Mammary epithelial cell (primary cell): ENCODE measurements at regions of chr13 and their contacts with region 1.

Region 1: GRCh38 chr13:111076156-111077013 is 38.7 kb upstream of the ARHGEF7 start:
- DNase-seq: no peak
- H3K4me3 ChIP-seq: no peak overlapping the region
- H3K27ac ChIP-seq: no peak overlapping the region
- H3K4me1 ChIP-seq: no peaks in the 10 kb centered on the region
- H3K27me3 ChIP-seq: no peaks in the 10 kb centered on the region
- CTCF ChIP-seq: no peak

Region 2: DNA sequence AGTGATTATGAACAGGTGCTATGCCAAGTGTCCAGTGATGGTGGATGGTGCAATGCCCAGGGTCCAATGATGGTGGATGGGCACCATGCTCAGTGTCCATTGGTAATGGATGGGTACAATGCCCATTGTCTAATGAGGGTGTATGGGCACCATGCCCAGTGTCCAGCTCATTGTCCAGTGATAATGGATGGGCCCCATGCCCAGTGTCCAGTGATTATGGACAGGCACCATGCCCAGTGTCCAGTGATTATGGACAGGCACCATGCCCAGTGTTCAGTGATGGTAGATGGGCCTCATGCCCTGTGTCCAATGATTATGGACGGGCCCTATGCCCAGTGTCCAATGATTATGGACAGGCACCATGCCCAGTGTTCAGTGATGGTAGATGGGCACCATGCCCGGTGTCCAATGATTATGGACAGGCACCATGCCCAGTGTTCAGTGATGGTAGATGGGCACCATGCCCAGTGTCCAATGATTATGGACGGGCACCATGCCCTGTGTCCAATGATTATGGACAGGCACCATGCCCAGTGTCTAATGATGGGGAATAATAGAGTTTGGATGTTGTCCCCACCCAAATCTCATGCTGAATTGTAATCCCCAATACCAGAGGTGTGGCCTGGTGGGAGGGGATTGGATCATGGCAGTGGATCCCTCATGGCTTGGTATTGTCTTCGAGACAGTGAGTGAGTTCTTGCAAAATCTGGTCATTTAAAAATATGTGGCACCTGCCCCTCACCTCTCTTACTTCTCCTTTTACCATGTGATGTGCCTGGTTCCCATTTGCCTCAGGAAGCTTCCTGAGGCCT is 249.3 kb before region 1 on chr13:
- CTCF ChIA-PET with region 1: no interaction called
- dilution Hi-C with region 1: no loop called
- in situ Hi-C with region 1: no loop called
- intact Hi-C with region 1: no loop called
- DNase-seq: no peak
- H3K4me3 ChIP-seq: no peak overlapping the region
- H3K27ac ChIP-seq: no peak overlapping the region
- H3K4me1 ChIP-seq: no peaks in the 10 kb centered on the region
- H3K27me3 ChIP-seq: no peaks in the 10 kb centered on the region
- CTCF ChIP-seq: no peak

Region 3: GRCh38 chr13:110907951-110908898 is 168.2 kb before region 1 on chr13:
- CTCF ChIA-PET with region 1: no interaction called
- dilution Hi-C with region 1: no loop called
- in situ Hi-C with region 1: no loop called
- intact Hi-C with region 1: no loop called
- DNase-seq: peak; percentile 99
- H3K4me3 ChIP-seq: peak overlapping the region in 1 of 3 experiments; percentile 12
- H3K27ac ChIP-seq: peak overlapping the region; percentile 100
- H3K4me1 ChIP-seq: peaks cover 67% of the 10 kb centered on the region
- H3K27me3 ChIP-seq: no peaks in the 10 kb centered on the region
- CTCF ChIP-seq: peak in 1 of 2 donors; percentile 36

Region 4: DNA sequence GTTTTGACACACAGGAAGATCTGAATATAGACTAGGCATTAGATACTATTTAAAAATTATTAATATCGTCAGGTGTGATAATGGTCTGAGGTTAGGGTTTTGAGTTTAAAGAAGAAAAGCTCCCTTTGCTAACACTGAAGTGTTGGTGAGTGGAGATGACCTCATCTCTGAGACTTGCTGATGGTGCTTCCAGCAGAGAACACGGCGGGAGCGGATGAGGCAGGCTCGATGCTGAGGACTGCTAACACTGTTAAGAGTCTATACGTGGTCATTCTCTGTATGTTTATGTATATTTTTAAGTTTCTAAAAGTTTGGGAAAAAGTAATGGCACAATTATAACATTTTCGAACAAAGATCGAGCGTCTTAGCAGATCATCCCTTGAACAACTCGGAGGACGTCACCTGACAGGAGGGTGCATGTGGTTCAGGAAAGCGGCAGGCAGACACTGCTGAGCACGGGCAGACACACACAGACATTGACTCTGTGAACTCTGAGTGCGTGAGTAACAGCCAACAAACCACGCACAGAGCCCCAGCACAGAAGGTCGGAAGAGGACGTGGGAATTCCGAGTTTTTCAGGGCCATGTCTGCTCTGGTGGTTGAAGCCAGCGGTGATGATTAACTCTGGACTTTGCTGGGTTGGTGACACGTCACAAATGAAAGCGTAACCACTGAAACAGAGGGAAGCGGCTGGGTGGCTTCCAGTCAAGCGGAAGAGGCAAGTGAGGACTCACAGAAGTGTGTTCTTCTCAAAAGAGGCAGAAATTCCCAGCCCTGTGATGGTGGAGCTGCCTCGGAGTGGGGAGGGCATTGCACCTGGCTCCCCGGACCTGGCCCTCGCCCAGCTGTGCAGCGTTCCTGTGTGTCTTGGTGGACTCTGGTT is 152.1 kb after region 1 on chr13:
- CTCF ChIA-PET with region 1: no interaction called
- dilution Hi-C with region 1: no loop called
- in situ Hi-C with region 1: loop called in 1 of 2 experiments (anchors 10 kb)
- intact Hi-C with region 1: no loop called
- DNase-seq: no peak
- H3K4me3 ChIP-seq: no peak overlapping the region
- H3K27ac ChIP-seq: no peak overlapping the region
- H3K4me1 ChIP-seq: no peaks in the 10 kb centered on the region
- H3K27me3 ChIP-seq: no peaks in the 10 kb centered on the region
- CTCF ChIP-seq: no peak